MCF 10A (cell line): ENCODE measurements at regions of chr12 and their contacts with region 1.

Region 1: DNA sequence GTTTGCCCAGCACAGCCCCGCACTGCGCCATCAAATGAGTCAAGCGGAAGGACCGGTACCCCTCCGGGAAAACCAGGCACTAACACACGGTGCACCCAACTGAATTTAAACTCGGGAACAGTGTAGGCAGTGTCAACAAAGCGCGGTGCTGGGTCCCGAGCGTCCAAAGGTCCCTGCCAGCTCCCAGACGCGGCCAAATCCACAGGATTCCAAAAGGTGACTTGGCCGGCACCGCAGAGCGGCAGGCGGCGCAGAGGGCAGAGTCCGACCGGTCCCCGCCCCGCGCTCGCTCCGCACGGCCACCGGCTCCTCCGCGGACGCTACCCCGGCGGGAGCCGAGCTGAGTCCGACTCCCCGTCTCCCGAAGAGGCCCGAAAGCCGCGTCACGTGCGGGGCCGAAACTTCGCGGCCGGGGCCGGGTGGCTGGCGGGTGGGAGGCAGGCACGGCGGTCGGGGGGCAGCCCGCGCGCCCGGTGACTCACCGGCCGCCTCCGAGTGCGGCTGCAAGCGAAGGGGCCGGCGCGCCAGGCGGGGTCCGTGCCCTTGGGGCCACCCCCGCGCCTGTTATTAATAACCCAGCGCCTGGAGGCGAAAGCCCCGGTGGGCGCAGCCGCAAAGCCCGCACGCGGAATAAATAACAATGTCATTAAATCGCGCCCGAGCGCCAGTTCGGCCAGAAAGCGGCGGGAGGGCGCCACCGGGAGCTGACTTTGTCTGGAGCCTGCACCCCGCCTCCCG is 863 bp downstream of the DENND5B start:
- DNase-seq: peak; percentile 76
- H3K4me3 Mint-ChIP-seq: peak overlapping the region; percentile 96
- H3K27ac Mint-ChIP-seq: peak overlapping the region; percentile 92
- H3K4me1 Mint-ChIP-seq: peaks cover 36% of the 10 kb centered on the region
- H3K27me3 Mint-ChIP-seq: no peaks in the 10 kb centered on the region
- CTCF ChIP-seq: no peak

Region 2: GRCh38 chr12:31337952-31338351 is 252.1 kb before region 1 on chr12:
- CTCF ChIA-PET with region 1: no interaction called
- POLR2A ChIA-PET with region 1: no interaction called
- intact Hi-C with region 1: no loop called
- DNase-seq: no peak
- H3K4me3 Mint-ChIP-seq: no peak overlapping the region
- H3K27ac Mint-ChIP-seq: no peak overlapping the region
- H3K4me1 Mint-ChIP-seq: no peaks in the 10 kb centered on the region
- H3K27me3 Mint-ChIP-seq: peaks cover 8% of the 10 kb centered on the region
- CTCF ChIP-seq: no peak

Region 3: GRCh38 chr12:31406345-31406744 is 183.7 kb before region 1 on chr12:
- CTCF ChIA-PET with region 1: interaction called, 3 read pairs
- POLR2A ChIA-PET with region 1: interaction called, 4 read pairs
- intact Hi-C with region 1: loop called (anchors 1 kb)
- DNase-seq: no peak
- H3K4me3 Mint-ChIP-seq: no peak overlapping the region
- H3K27ac Mint-ChIP-seq: no peak overlapping the region
- H3K4me1 Mint-ChIP-seq: no peaks in the 10 kb centered on the region
- H3K27me3 Mint-ChIP-seq: no peaks in the 10 kb centered on the region
- CTCF ChIP-seq: no peak

Region 4: GRCh38 chr12:31491819-31492598 is 98.1 kb before region 1 on chr12:
- CTCF ChIA-PET with region 1: interaction called, 3 read pairs
- POLR2A ChIA-PET with region 1: interaction called, 27 read pairs
- intact Hi-C with region 1: no loop called
- DNase-seq: peak; percentile 89
- H3K4me3 Mint-ChIP-seq: peak overlapping the region; percentile 53
- H3K27ac Mint-ChIP-seq: peak overlapping the region; percentile 67
- H3K4me1 Mint-ChIP-seq: peaks cover 38% of the 10 kb centered on the region
- H3K27me3 Mint-ChIP-seq: no peaks in the 10 kb centered on the region
- CTCF ChIP-seq: no peak

Region 5: DNA sequence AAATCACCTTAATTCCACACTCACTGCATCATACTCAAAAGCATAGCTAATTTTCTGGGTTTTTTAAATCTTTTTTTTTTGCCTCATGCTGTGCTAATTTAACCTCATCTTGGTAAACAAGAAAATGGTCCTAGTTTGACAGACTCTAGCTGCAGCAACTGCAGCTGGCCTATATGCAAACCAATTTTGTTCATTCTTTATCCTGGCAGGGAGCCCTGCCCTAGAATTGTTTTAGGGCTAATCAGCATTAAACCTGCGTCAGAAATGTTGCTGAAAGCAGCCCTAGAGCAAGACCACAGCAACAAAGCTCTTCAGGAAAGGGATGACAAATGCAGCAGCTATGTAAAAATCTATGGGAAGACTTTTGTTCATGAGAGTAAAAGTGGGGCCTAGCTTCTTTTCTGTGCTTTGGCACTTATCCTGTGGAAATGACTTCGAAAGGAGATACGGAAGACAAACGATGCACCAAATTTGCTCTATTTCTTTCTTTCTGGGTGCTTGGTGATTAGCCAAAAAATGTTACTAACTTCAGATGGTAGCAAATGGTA is 71.3 kb before region 1 on chr12:
- CTCF ChIA-PET with region 1: interaction called, 4 read pairs
- POLR2A ChIA-PET with region 1: interaction called, 119 read pairs
- intact Hi-C with region 1: loop called (anchors 2 kb)
- DNase-seq: peak; percentile 98
- H3K4me3 Mint-ChIP-seq: peak overlapping the region; percentile 50
- H3K27ac Mint-ChIP-seq: peak overlapping the region; percentile 87
- H3K4me1 Mint-ChIP-seq: peaks cover 40% of the 10 kb centered on the region
- H3K27me3 Mint-ChIP-seq: no peaks in the 10 kb centered on the region
- CTCF ChIP-seq: no peak

Region 6: DNA sequence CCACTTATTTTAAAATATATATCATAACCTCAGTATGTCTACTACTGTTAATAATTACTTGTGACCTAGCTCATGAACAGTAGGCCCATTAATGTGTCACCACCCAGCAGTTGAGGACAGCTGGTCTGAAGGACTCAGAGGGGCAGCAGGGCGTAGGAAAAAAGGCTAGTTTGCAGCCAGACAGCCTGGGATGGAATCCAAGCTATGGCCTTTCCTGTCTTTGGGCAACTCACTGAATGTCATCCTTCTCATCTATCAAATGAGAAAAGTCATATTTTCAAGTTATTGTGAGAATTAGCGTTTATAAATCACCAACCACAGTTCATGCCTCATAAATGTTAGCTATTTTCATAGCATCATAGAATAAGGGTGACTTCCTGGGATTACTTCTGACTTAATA is 11.4 kb before region 1 on chr12:
- CTCF ChIA-PET with region 1: interaction called, 5 read pairs
- POLR2A ChIA-PET with region 1: interaction called, 29 read pairs
- intact Hi-C with region 1: no loop called
- DNase-seq: no peak
- H3K4me3 Mint-ChIP-seq: no peak overlapping the region
- H3K27ac Mint-ChIP-seq: no peak overlapping the region
- H3K4me1 Mint-ChIP-seq: peaks cover 13% of the 10 kb centered on the region
- H3K27me3 Mint-ChIP-seq: no peaks in the 10 kb centered on the region
- CTCF ChIP-seq: no peak